Gastrocnemius medialis (tissue), 4 donors: ENCODE measurements at regions of chr6 and their contacts with region 1.

Region 1: DNA sequence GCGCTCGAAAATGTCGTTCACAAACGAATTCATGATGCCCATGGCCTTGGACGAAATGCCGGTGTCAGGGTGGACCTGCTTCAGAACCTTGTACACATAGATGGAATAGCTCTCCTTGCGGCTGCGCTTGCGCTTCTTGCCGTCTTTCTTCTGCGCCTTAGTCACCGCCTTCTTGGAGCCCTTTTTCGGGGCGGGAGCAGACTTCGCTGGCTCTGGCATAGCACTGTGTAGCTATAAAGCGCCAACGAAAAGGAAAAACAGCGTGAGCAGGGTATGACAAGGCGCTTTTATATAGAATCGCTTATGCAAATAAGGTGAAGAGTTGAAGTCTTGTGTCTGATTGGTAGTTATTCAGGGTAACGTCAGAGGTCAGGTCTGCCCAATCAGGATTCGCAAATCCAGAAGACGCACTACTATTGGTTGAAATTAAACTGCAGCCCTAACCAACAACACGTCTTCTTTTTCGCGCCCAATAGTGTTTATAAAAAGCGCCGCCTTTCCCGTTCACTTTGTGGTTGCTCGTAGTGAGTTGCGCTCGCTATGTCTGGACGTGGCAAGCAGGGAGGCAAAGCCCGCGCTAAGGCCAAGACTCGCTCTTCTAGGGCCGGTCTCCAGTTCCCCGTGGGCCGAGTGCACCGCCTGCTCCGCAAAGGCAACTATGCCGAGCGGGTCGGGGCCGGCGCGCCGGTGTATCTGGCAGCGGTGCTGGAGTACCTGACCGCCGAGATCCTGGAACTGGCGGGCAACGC is 114.8 kb upstream of the PRSS16 start:
- DNase-seq: peak; percentile 82 to 88
- ATAC-seq: peak; percentile 99
- H3K4me3 ChIP-seq: peak overlapping the region; percentile 61 to 67 (median 65)
- H3K27ac ChIP-seq: peak overlapping the region; percentile 79 to 83 (median 81)
- H3K4me1 ChIP-seq: peaks cover 0 to 4% of the 10 kb centered on the region in 2 donors
- H3K27me3 ChIP-seq: no peaks in the 10 kb centered on the region
- CTCF ChIP-seq: no peak
- POLR2A ChIP-seq: peak; percentile 83 to 90

Region 2: GRCh38 chr6:26025894-26026832 is 1106.5 kb before region 1 on chr6:
- in situ Hi-C with region 1: loop called in 2 of 4 experiments (anchors 25 kb)
- intact Hi-C with region 1: loop called (anchors 10 kb)
- DNase-seq: peak; percentile 86 to 87
- ATAC-seq: peak; percentile 60 to 72
- H3K4me3 ChIP-seq: peak overlapping the region; percentile 46 to 65 (median 62)
- H3K27ac ChIP-seq: peak overlapping the region; percentile 80 to 88 (median 83)
- H3K4me1 ChIP-seq: peaks cover 0 to 15% of the 10 kb centered on the region in 2 donors
- H3K27me3 ChIP-seq: peaks cover 7 to 67% (median 13%) of the 10 kb centered on the region in 3 donors
- CTCF ChIP-seq: peak; percentile 50 to 75 (median 73)
- POLR2A ChIP-seq: peak; percentile 7

Region 3: GRCh38 chr6:26122793-26123674 is 1009.7 kb before region 1 on chr6:
- in situ Hi-C with region 1: loop called in 2 of 4 experiments (anchors 25 kb)
- intact Hi-C with region 1: loop called (anchors 5 kb)
- DNase-seq: peak; percentile 96 to 98
- ATAC-seq: peak; percentile 84 to 85
- H3K4me3 ChIP-seq: peak overlapping the region; percentile 77 to 96 (median 90)
- H3K27ac ChIP-seq: peak overlapping the region; percentile 94 to 98 (median 95)
- H3K4me1 ChIP-seq: peaks cover 18 to 26% of the 10 kb centered on the region in 2 donors
- H3K27me3 ChIP-seq: no peaks in the 10 kb centered on the region
- CTCF ChIP-seq: no peak
- POLR2A ChIP-seq: peak; percentile 43 to 47

Region 4: GRCh38 chr6:26520853-26521599 is 611.7 kb before region 1 on chr6:
- in situ Hi-C with region 1: no loop called
- intact Hi-C with region 1: loop called (anchors 1 kb)
- DNase-seq: peak; percentile 75 to 84
- ATAC-seq: peak; percentile 83 to 86
- H3K4me3 ChIP-seq: peak overlapping the region; percentile 66 to 84 (median 76)
- H3K27ac ChIP-seq: peak overlapping the region; percentile 90 to 98 (median 98)
- H3K4me1 ChIP-seq: peaks cover 16 to 29% of the 10 kb centered on the region in 2 donors
- H3K27me3 ChIP-seq: no peaks in the 10 kb centered on the region
- CTCF ChIP-seq: no peak
- POLR2A ChIP-seq: peak in 1 of 2 donors; percentile 3

Region 5: GRCh38 chr6:27177485-27178406 is 45.0 kb after region 1 on chr6:
- in situ Hi-C with region 1: no loop called
- intact Hi-C with region 1: loop called (anchors 5 kb)
- DNase-seq: peak; percentile 29 to 55
- ATAC-seq: peak; percentile 68 to 74
- H3K4me3 ChIP-seq: peak overlapping the region; percentile 81 to 92 (median 84)
- H3K27ac ChIP-seq: peak overlapping the region; percentile 55 to 72 (median 62)
- H3K4me1 ChIP-seq: peaks cover 5% of the 10 kb centered on the region in 2 donors
- H3K27me3 ChIP-seq: peaks cover 0 to 2% (median 0%) of the 10 kb centered on the region in 3 donors
- CTCF ChIP-seq: peak in 2 of 5 experiments; percentile 30 to 48
- POLR2A ChIP-seq: peak in 1 of 2 donors; percentile 18

Region 6: DNA sequence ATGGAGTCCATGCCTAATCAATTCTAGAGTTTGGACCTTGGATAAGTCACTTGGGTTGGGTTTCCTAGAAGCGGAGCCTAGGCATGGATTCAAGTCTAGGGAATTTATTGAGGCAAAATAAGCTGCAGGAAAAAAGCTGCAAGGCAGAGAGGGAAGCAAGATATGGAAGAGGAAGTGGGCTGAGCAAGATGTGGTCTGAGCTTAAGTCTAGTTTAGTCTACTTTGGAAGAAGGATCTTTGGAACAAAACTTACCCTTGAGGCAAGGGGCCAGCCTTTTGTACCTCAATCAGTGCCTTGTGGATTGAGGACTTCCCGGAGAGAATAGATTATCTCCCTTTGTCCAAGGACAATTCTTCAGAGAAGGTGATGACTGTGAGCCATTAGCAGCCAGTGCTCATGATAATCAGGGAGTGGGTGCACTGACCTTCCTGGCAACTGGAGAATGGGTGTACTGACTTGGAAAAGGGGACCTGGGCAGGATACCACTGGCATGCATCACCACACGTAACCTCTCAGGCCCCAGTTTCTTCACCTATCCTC is 1103.3 kb after region 1 on chr6:
- in situ Hi-C with region 1: no loop called
- intact Hi-C with region 1: no loop called
- DNase-seq: no peak
- ATAC-seq: no peak
- H3K4me3 ChIP-seq: no peak overlapping the region
- H3K27ac ChIP-seq: no peak overlapping the region
- H3K4me1 ChIP-seq: no peaks in the 10 kb centered on the region
- H3K27me3 ChIP-seq: no peaks in the 10 kb centered on the region
- CTCF ChIP-seq: no peak
- POLR2A ChIP-seq: no peak

Region 7: DNA sequence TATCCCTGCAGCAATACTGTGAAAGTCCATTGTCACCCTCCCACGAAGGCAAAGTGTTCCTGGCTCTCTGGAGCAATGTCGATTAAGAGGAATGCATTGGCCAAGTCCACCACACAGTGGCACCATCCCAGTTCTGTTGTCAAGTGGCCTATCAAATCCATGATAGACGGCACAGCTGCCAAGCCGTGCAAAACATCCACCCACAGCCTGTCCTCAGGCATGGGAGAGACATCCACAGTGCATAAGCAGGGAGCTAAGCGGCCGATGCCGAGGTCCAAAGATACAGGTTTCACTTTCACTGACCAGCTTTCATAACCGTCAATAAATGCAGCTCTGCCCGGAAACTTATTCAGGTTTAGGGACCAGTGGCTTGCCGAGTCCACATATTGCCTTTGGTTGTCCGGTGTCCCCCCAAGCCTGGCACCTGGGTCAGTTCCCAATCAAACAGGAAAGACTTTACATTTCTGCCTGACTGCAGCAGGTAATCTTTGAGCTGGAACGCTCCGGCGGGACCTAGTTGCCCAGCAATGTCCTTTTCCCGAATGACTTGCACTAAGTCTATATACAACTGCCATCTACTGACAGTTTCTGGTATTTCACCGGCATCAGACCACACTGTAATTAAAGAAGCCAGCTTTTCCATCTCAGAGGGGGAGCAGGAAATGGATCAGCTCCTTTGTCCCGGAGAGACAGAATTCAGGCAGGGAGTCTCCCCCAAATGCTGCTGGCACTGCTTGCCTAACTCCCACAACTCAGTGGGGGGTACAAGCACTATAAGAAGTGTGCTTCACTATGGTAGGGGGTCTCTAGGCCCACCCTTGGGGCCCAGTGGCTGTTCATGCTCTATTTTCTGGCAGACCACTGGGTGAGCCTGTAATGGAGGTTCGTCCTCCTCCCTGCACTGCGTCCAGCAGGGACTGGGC is 1223.3 kb after region 1 on chr6:
- in situ Hi-C with region 1: no loop called
- intact Hi-C with region 1: loop called (anchors 10 kb)
- DNase-seq: peak; percentile 63 to 65
- ATAC-seq: peak; percentile 93 to 95
- H3K4me3 ChIP-seq: peak overlapping the region; percentile 60 to 75 (median 74)
- H3K27ac ChIP-seq: peak overlapping the region; percentile 76 to 83 (median 82)
- H3K4me1 ChIP-seq: peaks cover 27 to 44% of the 10 kb centered on the region in 2 donors
- H3K27me3 ChIP-seq: no peaks in the 10 kb centered on the region
- CTCF ChIP-seq: peak; percentile 79 to 91 (median 88)
- POLR2A ChIP-seq: no peak